ENCODE measurements at regions of chr12 and their contacts with region 1.

Region 1: DNA sequence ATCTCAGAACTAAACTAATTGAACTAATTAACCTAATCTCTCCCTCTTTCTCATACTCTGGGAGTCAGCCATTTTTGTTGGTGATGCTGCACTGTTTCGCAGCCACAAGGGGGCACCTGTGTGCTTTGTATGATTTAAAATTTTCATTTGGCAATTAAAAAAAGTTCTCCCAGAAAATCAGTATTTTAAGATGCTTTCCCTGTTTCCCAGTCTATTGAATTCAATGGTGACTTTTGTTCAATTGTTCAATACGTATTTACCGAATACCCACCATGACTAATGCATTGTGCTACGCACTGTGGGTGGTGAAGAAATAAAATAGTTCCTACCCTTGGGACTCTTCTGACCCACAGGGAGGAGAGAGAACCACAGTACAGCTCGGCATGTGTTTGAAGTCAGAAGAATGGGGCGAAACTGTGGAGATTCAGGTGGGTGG is 63.7 kb downstream of the ZNF664 start:
- DNase-seq: peak; percentile 60
- H3K4me3 ChIP-seq: no peak overlapping the region
- H3K27ac ChIP-seq: no peak overlapping the region
- H3K4me1 ChIP-seq: peaks cover 6% of the 10 kb centered on the region
- H3K27me3 ChIP-seq: peaks cover 0 to 3% of the 10 kb centered on the region in 2 experiments
- CTCF ChIP-seq: peak; percentile 75 to 81
- POLR2A ChIP-seq: no peak

Region 2: GRCh38 chr12:123801573-123802178 is 235.0 kb before region 1 on chr12:
- CTCF ChIA-PET with region 1: interaction called, 15 read pairs
- POLR2A ChIA-PET with region 1: no interaction called
- dilution Hi-C with region 1: no loop called
- intact Hi-C with region 1: no loop called
- DNase-seq: peak; percentile 7
- H3K4me3 ChIP-seq: no peak overlapping the region
- H3K27ac ChIP-seq: no peak overlapping the region
- H3K4me1 ChIP-seq: no peaks in the 10 kb centered on the region
- H3K27me3 ChIP-seq: no peaks in the 10 kb centered on the region
- CTCF ChIP-seq: peak in 1 of 2 donors; percentile 25
- POLR2A ChIP-seq: no peak

Region 3: DNA sequence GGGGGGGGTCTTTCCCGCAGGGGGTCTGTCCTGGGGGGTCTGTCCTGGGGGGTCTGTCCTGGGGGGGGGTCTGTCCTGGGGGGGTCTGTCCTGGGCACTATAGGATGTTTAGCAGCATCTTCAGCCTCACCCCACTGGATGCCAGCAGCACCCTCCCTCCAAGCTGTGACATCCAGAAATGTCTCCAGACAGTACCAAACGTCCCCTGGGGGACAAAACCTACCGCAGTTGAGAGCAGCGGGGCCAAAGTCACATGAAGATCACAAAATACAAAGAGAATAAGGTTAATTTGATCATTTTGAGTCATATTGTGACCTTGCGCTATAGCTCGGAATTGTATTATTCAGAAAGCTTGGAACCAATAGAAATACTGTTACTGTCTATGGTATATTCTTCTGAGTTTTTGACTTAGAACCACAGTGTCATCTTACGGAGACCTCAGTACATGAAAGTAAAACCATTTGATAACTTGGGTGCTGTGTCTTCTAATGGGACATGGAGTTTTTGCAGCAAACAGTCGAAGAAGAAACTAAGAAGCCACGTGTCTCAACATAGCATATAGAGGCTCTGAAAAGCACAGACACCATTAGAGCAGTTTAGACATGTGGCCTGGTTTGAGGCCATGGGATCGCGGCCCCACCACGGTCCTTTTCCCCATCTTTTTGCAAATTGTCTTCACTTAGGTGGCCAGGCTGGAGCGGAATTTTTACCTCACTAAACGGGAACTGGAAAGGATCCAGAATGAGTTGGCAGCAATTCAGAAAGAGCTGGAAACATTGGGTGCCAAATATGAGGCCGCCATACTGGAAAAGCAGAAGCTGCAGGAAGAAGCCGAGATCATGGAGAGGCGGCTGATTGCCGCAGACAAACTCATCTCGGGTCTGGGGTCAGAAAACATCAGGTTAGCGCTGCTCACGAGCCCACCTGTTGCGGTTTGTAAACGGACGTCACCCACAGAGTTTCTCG is 124.0 kb before region 1 on chr12:
- CTCF ChIA-PET with region 1: interaction called, 20 read pairs
- POLR2A ChIA-PET with region 1: no interaction called
- dilution Hi-C with region 1: no loop called
- intact Hi-C with region 1: no loop called
- DNase-seq: no peak
- H3K4me3 ChIP-seq: no peak overlapping the region
- H3K27ac ChIP-seq: no peak overlapping the region
- H3K4me1 ChIP-seq: no peaks in the 10 kb centered on the region
- H3K27me3 ChIP-seq: peaks cover 2 to 9% of the 10 kb centered on the region in 2 experiments
- CTCF ChIP-seq: no peak
- POLR2A ChIP-seq: no peak

Region 4: GRCh38 chr12:124015494-124016461 is 20.9 kb before region 1 on chr12:
- CTCF ChIA-PET with region 1: interaction called, 13 read pairs
- POLR2A ChIA-PET with region 1: no interaction called
- dilution Hi-C with region 1: no loop called
- intact Hi-C with region 1: no loop called
- DNase-seq: no peak
- H3K4me3 ChIP-seq: no peak overlapping the region
- H3K27ac ChIP-seq: no peak overlapping the region
- H3K4me1 ChIP-seq: no peaks in the 10 kb centered on the region
- H3K27me3 ChIP-seq: no peaks in the 10 kb centered on the region
- CTCF ChIP-seq: no peak
- POLR2A ChIP-seq: no peak

Region 5: GRCh38 chr12:124906606-124907261 is 870.0 kb after region 1 on chr12:
- CTCF ChIA-PET with region 1: interaction called, 20 read pairs
- POLR2A ChIA-PET with region 1: no interaction called
- dilution Hi-C with region 1: no loop called
- intact Hi-C with region 1: loop called (anchors 5 kb)
- DNase-seq: peak; percentile 95
- H3K4me3 ChIP-seq: no peak overlapping the region
- H3K27ac ChIP-seq: no peak overlapping the region
- H3K4me1 ChIP-seq: peaks cover 22% of the 10 kb centered on the region
- H3K27me3 ChIP-seq: no peaks in the 10 kb centered on the region
- CTCF ChIP-seq: peak; percentile 90 to 97
- POLR2A ChIP-seq: peak; percentile 22

Measured in endothelial cell of umbilical vein (primary cell).